HepG2 (cell line): ENCODE measurements at regions of chr7 and their contacts with region 1.

Region 1: DNA sequence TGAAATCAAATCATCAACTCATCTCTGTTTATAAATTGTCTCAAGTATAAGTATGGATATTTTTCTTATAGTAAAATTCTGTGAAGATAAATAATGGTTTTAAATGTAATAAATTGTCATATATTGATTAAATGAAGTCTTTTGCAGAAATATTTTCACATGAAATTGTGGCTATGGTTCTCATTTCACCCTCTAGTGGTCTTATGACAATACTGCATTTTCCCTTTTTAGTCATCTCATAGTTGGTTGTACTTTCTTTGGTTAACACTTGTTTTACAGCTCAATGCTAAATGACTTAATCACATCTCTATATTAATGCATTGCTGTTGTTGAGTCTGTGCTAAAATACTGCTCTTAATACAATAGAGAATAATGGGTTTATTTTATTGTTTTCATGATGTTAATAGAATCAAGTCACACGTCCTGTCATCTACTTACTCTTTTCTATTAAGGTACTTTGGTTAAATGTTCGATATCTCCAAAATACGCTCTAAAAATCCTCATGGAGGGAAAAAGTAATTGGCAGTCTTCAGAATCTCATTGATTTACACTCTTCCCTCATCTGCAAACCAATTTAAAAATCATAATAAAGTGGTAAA is 38.0 kb upstream of the CACNA2D1 start:
- DNase-seq: peak; percentile 2
- ATAC-seq: no peak
- H3K4me3 ChIP-seq: no peak overlapping the region
- H3K27ac ChIP-seq: no peak overlapping the region
- H3K4me1 ChIP-seq: no peaks in the 10 kb centered on the region
- H3K27me3 ChIP-seq: no peaks in the 10 kb centered on the region
- CTCF ChIP-seq: peak; percentile 52
- EP300 ChIP-seq: no peak
- POLR2A ChIP-seq: no peak
- RAD21 ChIP-seq: no peak

Region 2: GRCh38 chr7:82036146-82036886 is 445.3 kb before region 1 on chr7:
- CTCF ChIA-PET with region 1: no interaction called
- POLR2A ChIA-PET with region 1: no interaction called
- in situ Hi-C with region 1: no loop called
- intact Hi-C with region 1: loop called (anchors 5 kb)
- DNase-seq: no peak
- ATAC-seq: no peak
- H3K4me3 ChIP-seq: no peak overlapping the region
- H3K27ac ChIP-seq: no peak overlapping the region
- H3K4me1 ChIP-seq: no peaks in the 10 kb centered on the region
- H3K27me3 ChIP-seq: no peaks in the 10 kb centered on the region
- CTCF ChIP-seq: no peak
- EP300 ChIP-seq: no peak
- POLR2A ChIP-seq: no peak
- RAD21 ChIP-seq: no peak

Region 3: DNA sequence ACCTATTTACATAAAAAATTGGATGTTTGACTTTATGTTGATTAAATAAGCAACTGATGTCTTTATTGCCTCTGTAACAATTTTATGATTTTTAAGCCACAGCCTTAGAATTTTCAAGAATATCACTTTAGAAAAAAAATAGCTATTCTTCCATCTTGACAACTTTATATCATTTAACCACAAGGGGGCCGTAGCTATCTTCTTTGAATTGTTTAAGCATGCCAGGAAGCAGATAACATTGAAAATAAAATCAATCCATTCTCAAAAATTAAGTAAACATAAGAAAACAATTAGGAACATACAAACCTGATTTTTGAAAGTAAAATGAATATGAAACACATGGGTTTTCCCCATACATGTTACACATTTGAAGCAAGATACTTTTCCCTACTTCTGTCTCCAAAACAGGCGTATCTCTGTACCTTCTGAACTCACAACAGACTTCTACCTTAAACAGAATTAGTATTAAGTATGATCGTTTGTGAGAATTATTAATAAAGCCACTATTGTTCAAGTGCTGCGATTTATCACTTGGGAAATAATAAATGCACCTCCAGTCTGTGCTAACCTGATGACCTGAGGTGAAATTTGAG is 247.0 kb before region 1 on chr7:
- CTCF ChIA-PET with region 1: no interaction called
- POLR2A ChIA-PET with region 1: no interaction called
- in situ Hi-C with region 1: no loop called
- intact Hi-C with region 1: loop called (anchors 10 kb)
- DNase-seq: peak; percentile 16
- ATAC-seq: no peak
- H3K4me3 ChIP-seq: no peak overlapping the region
- H3K27ac ChIP-seq: no peak overlapping the region
- H3K4me1 ChIP-seq: no peaks in the 10 kb centered on the region
- H3K27me3 ChIP-seq: no peaks in the 10 kb centered on the region
- CTCF ChIP-seq: peak; percentile 39
- EP300 ChIP-seq: no peak
- POLR2A ChIP-seq: no peak
- RAD21 ChIP-seq: no peak

Region 4: GRCh38 chr7:82464372-82464771 is 17.2 kb before region 1 on chr7:
- CTCF ChIA-PET with region 1: no interaction called
- POLR2A ChIA-PET with region 1: no interaction called
- in situ Hi-C with region 1: no loop called
- intact Hi-C with region 1: no loop called
- DNase-seq: no peak
- ATAC-seq: no peak
- H3K4me3 ChIP-seq: no peak overlapping the region
- H3K27ac ChIP-seq: no peak overlapping the region
- H3K4me1 ChIP-seq: no peaks in the 10 kb centered on the region
- H3K27me3 ChIP-seq: no peaks in the 10 kb centered on the region
- CTCF ChIP-seq: no peak
- EP300 ChIP-seq: no peak
- POLR2A ChIP-seq: no peak
- RAD21 ChIP-seq: no peak